ENCODE measurements at regions of chr6 and their contacts with region 1.

Region 1: GRCh38 chr6:21593412-21593926 is at the start of gene SOX4:
- DNase-seq: peak; percentile 98
- ATAC-seq: peak; percentile 79
- H3K4me3 ChIP-seq: peak within 1 kb of the TSS; percentile 84
- H3K27ac ChIP-seq: peak within 1 kb of the TSS; percentile 90
- H3K4me1 ChIP-seq: no peaks in the 10 kb centered on the region
- H3K27me3 ChIP-seq: no peaks in the 10 kb centered on the region
- CTCF ChIP-seq: no peak
- POLR2A ChIP-seq: peak; percentile 98
- RAD21 ChIP-seq: no peak; the same call in 1 of the 2 replicates
- total RNA-seq, gene SOX4: 4.7 and 6.4 TPM in 2 replicates

Region 2: GRCh38 chr6:20811109-20811746 is 782.2 kb before region 1 on chr6:
- CTCF ChIA-PET with region 1: no interaction called
- POLR2A ChIA-PET with region 1: no interaction called
- dilution Hi-C with region 1: no loop called
- in situ Hi-C with region 1: no loop called
- intact Hi-C with region 1: loop called (anchors 5 kb)
- DNase-seq: peak; percentile 99
- ATAC-seq: peak; percentile 92
- H3K4me3 ChIP-seq: no peak overlapping the region
- H3K27ac ChIP-seq: peak overlapping the region; percentile 87; the same call in 1 of the 2 replicates
- H3K4me1 ChIP-seq: peaks cover 6% of the 10 kb centered on the region
- H3K27me3 ChIP-seq: no peaks in the 10 kb centered on the region
- CTCF ChIP-seq: no peak
- POLR2A ChIP-seq: no peak
- RAD21 ChIP-seq: no peak

Region 3: DNA sequence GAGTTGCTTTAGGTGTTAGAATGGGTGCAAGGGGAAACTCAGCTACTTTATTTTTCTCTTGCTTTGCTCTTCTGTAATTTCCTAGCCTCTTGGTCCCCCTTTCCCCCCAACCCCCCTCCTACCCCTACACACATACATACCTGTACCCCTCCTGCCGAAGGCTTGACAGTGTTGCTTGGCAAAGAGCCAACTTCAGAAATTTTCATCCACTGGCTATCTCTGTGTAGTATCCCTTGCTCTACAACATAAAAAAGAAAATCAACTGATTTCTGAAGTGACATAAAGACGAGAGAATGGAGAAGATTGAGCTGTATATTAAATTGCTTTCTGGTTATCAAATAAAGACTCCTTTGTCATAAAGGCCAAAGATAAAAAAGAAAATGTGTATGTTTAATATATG is 498.0 kb before region 1 on chr6:
- CTCF ChIA-PET with region 1: no interaction called
- POLR2A ChIA-PET with region 1: interaction called, 14 read pairs
- dilution Hi-C with region 1: no loop called
- in situ Hi-C with region 1: no loop called
- intact Hi-C with region 1: loop called (anchors 10 kb)
- DNase-seq: no peak
- ATAC-seq: no peak
- H3K4me3 ChIP-seq: no peak overlapping the region
- H3K27ac ChIP-seq: no peak overlapping the region
- H3K4me1 ChIP-seq: no peaks in the 10 kb centered on the region
- H3K27me3 ChIP-seq: no peaks in the 10 kb centered on the region
- CTCF ChIP-seq: no peak
- POLR2A ChIP-seq: no peak
- RAD21 ChIP-seq: no peak

Region 4: DNA sequence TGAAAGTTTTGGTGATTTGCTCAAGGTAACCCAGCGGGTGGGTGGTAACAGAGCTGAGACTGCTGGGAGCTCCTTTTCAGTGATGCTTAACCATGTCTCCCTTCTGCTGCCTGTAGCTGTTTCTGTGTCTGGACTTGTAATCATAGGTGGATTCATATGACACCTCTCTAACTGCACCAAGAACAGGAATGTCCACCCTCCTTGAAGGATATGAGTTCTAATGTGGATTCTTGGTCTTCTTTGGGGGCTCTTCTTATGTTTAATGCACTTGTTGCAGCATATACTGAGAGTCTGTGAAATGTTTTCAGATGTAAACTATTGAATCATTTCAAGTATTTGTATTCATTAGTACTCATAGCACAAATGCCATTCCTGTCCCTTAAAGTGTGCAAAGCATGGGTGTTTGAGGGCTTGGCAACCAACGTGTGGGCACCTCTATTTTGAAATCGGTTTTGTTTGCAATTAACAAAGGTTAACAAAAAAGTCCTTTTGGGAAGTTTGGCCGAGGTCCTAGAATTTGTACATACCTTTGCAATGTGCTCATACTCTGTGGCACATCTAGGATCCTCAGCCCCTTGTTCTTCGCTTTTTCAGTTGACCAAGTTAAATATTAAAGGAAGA is 138.1 kb after region 1 on chr6:
- CTCF ChIA-PET with region 1: no interaction called
- POLR2A ChIA-PET with region 1: no interaction called
- dilution Hi-C with region 1: no loop called
- in situ Hi-C with region 1: no loop called
- intact Hi-C with region 1: no loop called
- DNase-seq: peak; percentile 61
- ATAC-seq: peak; percentile 82
- H3K4me3 ChIP-seq: no peak overlapping the region
- H3K27ac ChIP-seq: peak overlapping the region; percentile 37; the same call in 1 of the 2 replicates
- H3K4me1 ChIP-seq: peaks cover 9% of the 10 kb centered on the region
- H3K27me3 ChIP-seq: no peaks in the 10 kb centered on the region
- CTCF ChIP-seq: no peak
- POLR2A ChIP-seq: no peak
- RAD21 ChIP-seq: no peak

Region 5: DNA sequence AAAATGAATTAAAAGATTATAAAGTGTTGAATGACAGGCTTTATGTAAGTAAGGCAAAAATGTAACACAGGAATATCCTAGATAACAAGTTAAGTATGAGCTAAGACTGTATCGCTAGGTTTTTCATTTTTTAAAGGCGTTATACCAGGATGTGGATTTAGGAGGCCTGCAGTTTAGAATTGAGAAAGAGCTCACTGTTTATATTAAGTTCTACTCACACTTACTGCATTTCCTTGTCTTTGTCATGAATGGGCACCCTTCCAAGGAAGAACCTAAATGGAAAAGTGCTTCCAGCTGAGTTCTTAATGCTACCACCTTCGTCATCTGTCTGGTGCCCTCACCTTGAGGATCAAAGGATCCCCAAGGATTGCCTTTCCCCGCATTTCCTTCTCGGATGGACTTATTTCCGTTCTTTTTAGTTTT is 148.8 kb after region 1 on chr6:
- CTCF ChIA-PET with region 1: interaction called, 3 read pairs
- POLR2A ChIA-PET with region 1: no interaction called
- dilution Hi-C with region 1: no loop called
- in situ Hi-C with region 1: no loop called
- intact Hi-C with region 1: loop called (anchors 5 kb)
- DNase-seq: peak; percentile 98
- ATAC-seq: peak; percentile 82
- H3K4me3 ChIP-seq: no peak overlapping the region
- H3K27ac ChIP-seq: peak overlapping the region; percentile 47; the same call in 1 of the 2 replicates
- H3K4me1 ChIP-seq: peaks cover 11% of the 10 kb centered on the region
- H3K27me3 ChIP-seq: no peaks in the 10 kb centered on the region
- CTCF ChIP-seq: no peak
- POLR2A ChIP-seq: no peak
- RAD21 ChIP-seq: no peak

Region 6: DNA sequence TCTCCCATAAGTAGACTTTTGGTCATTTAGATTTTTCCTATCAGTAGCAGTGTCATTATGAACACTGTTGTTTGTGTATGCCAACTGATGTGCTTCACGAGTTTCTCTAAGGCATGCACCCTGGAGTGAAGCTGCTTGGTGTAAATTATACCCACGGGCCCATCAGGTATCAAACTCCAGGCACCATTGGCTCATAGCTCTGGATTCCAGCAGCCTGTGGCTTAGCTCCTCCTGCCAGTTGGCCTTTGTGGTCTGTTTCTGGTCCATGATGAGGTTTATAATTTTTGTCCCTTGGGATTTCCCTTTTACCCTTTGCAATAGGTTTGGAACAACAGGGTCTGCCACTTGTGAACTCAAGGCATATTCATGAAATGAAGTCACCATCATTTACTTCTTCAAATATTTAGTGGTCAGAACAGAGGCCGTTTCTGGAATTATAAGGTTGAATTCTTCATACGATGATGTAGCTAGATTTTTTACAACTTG is 352.9 kb after region 1 on chr6:
- CTCF ChIA-PET with region 1: interaction called, 3 read pairs
- POLR2A ChIA-PET with region 1: interaction called, 7 read pairs
- dilution Hi-C with region 1: no loop called
- in situ Hi-C with region 1: no loop called
- intact Hi-C with region 1: loop called (anchors 5 kb)
- DNase-seq: peak; percentile 98
- ATAC-seq: peak; percentile 84
- H3K4me3 ChIP-seq: no peak overlapping the region
- H3K27ac ChIP-seq: peak overlapping the region; percentile 70
- H3K4me1 ChIP-seq: peaks cover 19% of the 10 kb centered on the region
- H3K27me3 ChIP-seq: no peaks in the 10 kb centered on the region
- CTCF ChIP-seq: no peak
- POLR2A ChIP-seq: peak; percentile 87
- RAD21 ChIP-seq: no peak

Region 7: GRCh38 chr6:22248513-22249308 is 655.2 kb after region 1 on chr6:
- CTCF ChIA-PET with region 1: no interaction called
- POLR2A ChIA-PET with region 1: no interaction called
- dilution Hi-C with region 1: no loop called
- in situ Hi-C with region 1: no loop called
- intact Hi-C with region 1: loop called (anchors 5 kb)
- DNase-seq: peak; percentile 83
- ATAC-seq: peak; percentile 74
- H3K4me3 ChIP-seq: no peak overlapping the region
- H3K27ac ChIP-seq: peak overlapping the region; percentile 43; the same call in 1 of the 2 replicates
- H3K4me1 ChIP-seq: peaks cover 11% of the 10 kb centered on the region
- H3K27me3 ChIP-seq: no peaks in the 10 kb centered on the region
- CTCF ChIP-seq: no peak
- POLR2A ChIP-seq: no peak
- RAD21 ChIP-seq: no peak; the same call in 1 of the 2 replicates

Region 8: GRCh38 chr6:23446394-23447046 is 1853.1 kb after region 1 on chr6:
- CTCF ChIA-PET with region 1: interaction called, 4 read pairs
- POLR2A ChIA-PET with region 1: no interaction called
- dilution Hi-C with region 1: no loop called
- in situ Hi-C with region 1: loop called (anchors 10 kb)
- intact Hi-C with region 1: loop called (anchors 2 kb)
- DNase-seq: peak; percentile 76
- ATAC-seq: peak; percentile 94
- H3K4me3 ChIP-seq: no peak overlapping the region
- H3K27ac ChIP-seq: no peak overlapping the region
- H3K4me1 ChIP-seq: no peaks in the 10 kb centered on the region
- H3K27me3 ChIP-seq: no peaks in the 10 kb centered on the region
- CTCF ChIP-seq: peak; percentile 80
- POLR2A ChIP-seq: no peak
- RAD21 ChIP-seq: peak; percentile 89